Naive thymus-derived CD4-positive, alpha-beta T cell (primary cell): ENCODE measurements at regions of chr9 and their contacts with region 1.

Region 1: GRCh38 chr9:124771021-124771866 is at the start of gene NR6A1:
- DNase-seq: peak; percentile 86 to 94 (median 91)
- ATAC-seq: peak; percentile 94
- H3K4me3 ChIP-seq: peak within 1 kb of the TSS; percentile 87
- H3K4me3 Mint-ChIP-seq: peak within 1 kb of the TSS; percentile 86 to 97 (median 91)
- H3K27ac ChIP-seq: no peak within 1 kb of the TSS
- H3K27ac Mint-ChIP-seq: peak within 1 kb of the TSS; percentile 39 to 93 (median 79)
- H3K4me1 ChIP-seq: peaks cover 13 to 20% of the 10 kb centered on the region in 2 donors
- H3K4me1 Mint-ChIP-seq: peaks cover 17 to 46% (median 42%) of the 10 kb centered on the region in 7 donors
- H3K27me3 ChIP-seq: peaks cover 7 to 38% of the 10 kb centered on the region in 2 donors
- H3K27me3 Mint-ChIP-seq: peaks cover 61 to 82% (median 75%) of the 10 kb centered on the region in 5 donors
- total RNA-seq, gene NR6A1: 0.21 to 0.78 (median 0.51) TPM in 3 of 5 experiments, not detected in the others

Region 2: GRCh38 chr9:124658165-124659017 is 112.9 kb before region 1 on chr9:
- CTCF ChIA-PET with region 1: no interaction called
- POLR2A ChIA-PET with region 1: no interaction called
- intact Hi-C with region 1: loop called in 1 of 2 experiments (anchors 1 kb)
- DNase-seq: peak in 7 of 9 donors; percentile 21 to 44 (median 34)
- ATAC-seq: peak; percentile 84
- H3K4me3 ChIP-seq: peak overlapping the region; percentile 71
- H3K4me3 Mint-ChIP-seq: peak overlapping the region; percentile 87 to 98 (median 94)
- H3K27ac ChIP-seq: peak overlapping the region; percentile 61
- H3K27ac Mint-ChIP-seq: peak overlapping the region in 8 of 9 donors; percentile 85 to 98 (median 89)
- H3K4me1 ChIP-seq: peaks cover 0 to 6% of the 10 kb centered on the region in 2 donors
- H3K4me1 Mint-ChIP-seq: peaks cover 23 to 61% (median 35%) of the 10 kb centered on the region in 7 donors
- H3K27me3 ChIP-seq: no peaks in the 10 kb centered on the region
- H3K27me3 Mint-ChIP-seq: peaks cover 0 to 18% (median 0%) of the 10 kb centered on the region in 5 donors

Region 3: GRCh38 chr9:124861342-124862229 is 90.3 kb after region 1 on chr9 and contains the starts of genes ARPC5L and RPL35:
- CTCF ChIA-PET with region 1: interaction called, 66 read pairs
- POLR2A ChIA-PET with region 1: interaction called, 6 read pairs
- intact Hi-C with region 1: loop called (anchors 1 kb)
- DNase-seq: peak; percentile 91 to 97 (median 95)
- ATAC-seq: peak; percentile 98
- H3K4me3 ChIP-seq: peak within 1 kb of the TSS; percentile 88
- H3K4me3 Mint-ChIP-seq: peak within 1 kb of the TSS; percentile 89 to 99 (median 95)
- H3K27ac ChIP-seq: peak within 1 kb of the TSS; percentile 87
- H3K27ac Mint-ChIP-seq: peak within 1 kb of the TSS; percentile 91 to 99 (median 96)
- H3K4me1 ChIP-seq: peaks cover 7 to 16% of the 10 kb centered on the region in 2 donors
- H3K4me1 Mint-ChIP-seq: peaks cover 7 to 36% (median 29%) of the 10 kb centered on the region in 7 donors
- H3K27me3 ChIP-seq: no peaks in the 10 kb centered on the region
- H3K27me3 Mint-ChIP-seq: no peaks in the 10 kb centered on the region
- total RNA-seq, gene ARPC5L: 20.0 to 66.1 (median 33.1) TPM
- total RNA-seq, gene RPL35: 1,415 to 1,987 (median 1,778) TPM

Region 4: DNA sequence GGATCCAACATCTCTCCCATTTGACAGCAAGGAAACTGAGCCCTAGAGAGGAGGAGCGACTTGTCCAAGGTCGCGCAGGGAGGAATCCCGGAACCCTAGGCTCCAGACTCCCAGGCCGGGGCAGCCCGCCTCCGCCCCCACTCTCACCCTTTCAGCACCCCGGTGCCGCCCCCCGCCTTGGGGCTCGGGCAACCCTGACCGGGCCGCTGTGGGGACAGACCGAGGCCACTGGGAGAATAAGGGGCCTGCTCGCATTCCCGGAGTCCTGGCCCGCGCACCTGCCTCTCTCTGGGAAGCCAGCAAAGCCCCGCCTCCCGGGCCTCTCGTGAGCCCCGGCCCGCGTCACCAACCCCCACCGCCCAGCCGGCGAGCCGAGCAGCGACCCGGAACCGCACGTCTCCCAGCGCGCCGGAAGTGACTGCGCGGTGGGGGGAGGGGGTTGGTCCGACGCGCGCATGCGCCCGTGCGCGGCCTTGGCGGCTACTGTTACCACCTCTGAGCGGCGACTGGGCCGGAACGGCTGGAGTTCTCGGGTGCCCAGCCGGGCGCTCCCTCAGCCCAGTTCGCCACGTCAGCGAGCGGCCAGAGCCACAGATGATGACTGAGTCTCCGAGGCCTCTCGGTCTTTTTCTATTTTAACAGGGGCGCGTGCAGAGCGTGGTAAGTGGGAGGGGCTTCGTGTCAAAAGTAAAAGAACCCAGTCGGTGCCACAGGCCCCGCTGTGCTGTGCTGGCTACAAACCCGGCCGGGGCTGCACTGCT is 169.6 kb after region 1 on chr9 and contains the start of gene GOLGA1:
- CTCF ChIA-PET with region 1: no interaction called
- POLR2A ChIA-PET with region 1: no interaction called
- intact Hi-C with region 1: loop called in 1 of 2 experiments (anchors 1 kb)
- DNase-seq: peak; percentile 90 to 96 (median 94)
- ATAC-seq: peak; percentile 93
- H3K4me3 ChIP-seq: peak within 1 kb of the TSS; percentile 90
- H3K4me3 Mint-ChIP-seq: peak within 1 kb of the TSS; percentile 80 to 99 (median 92)
- H3K27ac ChIP-seq: peak within 1 kb of the TSS; percentile 95
- H3K27ac Mint-ChIP-seq: peak within 1 kb of the TSS; percentile 91 to 100 (median 98)
- H3K4me1 ChIP-seq: peaks cover 8% of the 10 kb centered on the region in 2 donors
- H3K4me1 Mint-ChIP-seq: peaks cover 16 to 44% (median 35%) of the 10 kb centered on the region in 7 donors
- H3K27me3 ChIP-seq: no peaks in the 10 kb centered on the region
- H3K27me3 Mint-ChIP-seq: no peaks in the 10 kb centered on the region
- total RNA-seq, gene GOLGA1: 19.6 to 37.8 (median 30.5) TPM

Region 5: GRCh38 chr9:125189361-125190289 is 418.4 kb after region 1 on chr9 and contains the start of gene PPP6C:
- CTCF ChIA-PET with region 1: no interaction called
- POLR2A ChIA-PET with region 1: no interaction called
- intact Hi-C with region 1: loop called in 1 of 2 experiments (anchors 5 kb)
- DNase-seq: peak; percentile 92 to 97 (median 96)
- ATAC-seq: peak; percentile 98
- H3K4me3 ChIP-seq: peak within 1 kb of the TSS; percentile 99
- H3K4me3 Mint-ChIP-seq: peak within 1 kb of the TSS; percentile 89 to 99 (median 96)
- H3K27ac ChIP-seq: peak within 1 kb of the TSS; percentile 98
- H3K27ac Mint-ChIP-seq: peak within 1 kb of the TSS; percentile 90 to 97 (median 95)
- H3K4me1 ChIP-seq: peaks cover 35 to 51% of the 10 kb centered on the region in 2 donors
- H3K4me1 Mint-ChIP-seq: peaks cover 35 to 79% (median 57%) of the 10 kb centered on the region in 7 donors
- H3K27me3 ChIP-seq: no peaks in the 10 kb centered on the region
- H3K27me3 Mint-ChIP-seq: peaks cover 0 to 4% (median 0%) of the 10 kb centered on the region in 5 donors
- total RNA-seq, gene PPP6C: 32.9 to 54.2 (median 49.5) TPM

Region 6: DNA sequence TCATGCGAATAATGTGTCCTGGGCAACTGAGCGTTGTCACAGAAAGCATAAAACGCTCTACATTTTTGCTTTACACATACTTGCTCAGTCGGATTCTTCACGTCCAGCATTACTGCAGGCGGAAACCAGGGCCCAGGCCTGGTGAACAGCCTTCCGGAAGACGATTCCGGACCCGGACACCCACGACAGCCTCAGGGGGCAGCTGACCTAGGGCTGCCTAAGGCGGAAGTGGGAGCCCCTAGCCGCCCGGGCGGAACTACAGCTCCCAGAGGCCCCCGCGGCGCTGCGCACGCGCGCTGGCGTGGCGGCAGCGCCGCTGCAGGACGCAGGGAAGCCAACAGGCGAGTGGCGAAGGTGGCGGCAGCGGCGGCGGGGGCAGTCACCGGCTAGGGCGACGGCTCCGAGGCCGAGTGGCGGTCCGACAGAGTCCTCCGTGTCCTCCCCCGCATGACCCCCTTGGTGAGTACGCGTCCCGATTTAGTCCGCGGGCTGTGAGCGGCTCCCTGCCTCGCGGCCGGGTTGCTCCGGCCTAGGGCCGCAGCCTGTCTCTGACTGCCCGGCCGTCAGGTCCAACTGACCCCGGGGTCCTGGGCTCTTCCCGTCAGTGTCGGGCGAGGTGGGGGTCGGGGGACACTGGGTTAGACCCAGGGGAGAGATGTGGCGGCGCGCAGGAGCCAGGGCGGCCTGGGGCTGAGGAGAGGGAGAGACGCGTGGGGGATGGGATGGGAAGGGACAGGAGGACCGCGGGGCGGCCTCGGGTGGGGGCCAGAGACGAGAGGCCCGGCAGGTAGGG is 490.5 kb after region 1 on chr9 and contains the start of gene GAPVD1:
- CTCF ChIA-PET with region 1: no interaction called
- POLR2A ChIA-PET with region 1: no interaction called
- intact Hi-C with region 1: loop called in 1 of 2 experiments (anchors 1 kb)
- DNase-seq: peak; percentile 83 to 95 (median 89)
- ATAC-seq: peak; percentile 97
- H3K4me3 ChIP-seq: peak within 1 kb of the TSS; percentile 97
- H3K4me3 Mint-ChIP-seq: peak within 1 kb of the TSS; percentile 82 to 99 (median 98)
- H3K27ac ChIP-seq: peak within 1 kb of the TSS; percentile 94
- H3K27ac Mint-ChIP-seq: peak within 1 kb of the TSS; percentile 83 to 99 (median 94)
- H3K4me1 ChIP-seq: peaks cover 8 to 24% of the 10 kb centered on the region in 2 donors
- H3K4me1 Mint-ChIP-seq: peaks cover 21 to 48% (median 42%) of the 10 kb centered on the region in 7 donors
- H3K27me3 ChIP-seq: no peaks in the 10 kb centered on the region
- H3K27me3 Mint-ChIP-seq: no peaks in the 10 kb centered on the region
- total RNA-seq, gene GAPVD1: 57.3 to 68.9 (median 65.0) TPM